Right ventricle myocardium superior (tissue), 1 donor: ENCODE measurements at regions of chr1 and their contacts with region 1.

Region 1: GRCh38 chr1:45359882-45360513 is 19.8 kb upstream of the MUTYH start:
- DNase-seq: peak; percentile 65
- ATAC-seq: peak; percentile 92

Region 2: DNA sequence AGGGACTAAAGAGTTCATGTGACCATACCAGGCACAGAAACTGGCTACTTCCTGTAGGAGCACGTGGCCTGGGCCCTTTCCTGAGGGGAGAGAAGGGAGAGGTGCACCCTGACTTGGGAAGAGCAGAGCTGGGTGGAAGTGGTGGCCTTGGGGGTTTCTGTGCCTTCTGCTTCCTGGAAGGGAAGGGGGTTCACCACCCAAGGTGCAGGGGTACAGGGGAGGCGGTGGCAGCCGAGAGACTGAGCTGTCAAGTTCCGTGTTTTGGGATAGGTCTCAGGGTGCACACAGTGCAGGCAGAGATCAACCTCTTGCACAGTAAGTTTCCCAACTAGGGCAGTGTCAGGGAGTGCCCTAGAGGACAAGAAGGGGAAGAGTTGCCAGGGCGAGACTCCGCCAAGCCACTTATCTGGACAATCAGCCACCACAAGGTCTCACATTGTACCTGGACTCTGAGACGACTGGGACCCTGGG is 359.0 kb before region 1 on chr1:
- intact Hi-C with region 1: no loop called
- DNase-seq: no peak
- ATAC-seq: peak; percentile 42

Region 3: GRCh38 chr1:45051005-45051772 is 308.8 kb before region 1 on chr1:
- intact Hi-C with region 1: no loop called
- DNase-seq: no peak
- ATAC-seq: no peak

Region 4: GRCh38 chr1:45230540-45230939 is 129.5 kb before region 1 on chr1:
- intact Hi-C with region 1: no loop called
- DNase-seq: no peak
- ATAC-seq: no peak

Region 5: DNA sequence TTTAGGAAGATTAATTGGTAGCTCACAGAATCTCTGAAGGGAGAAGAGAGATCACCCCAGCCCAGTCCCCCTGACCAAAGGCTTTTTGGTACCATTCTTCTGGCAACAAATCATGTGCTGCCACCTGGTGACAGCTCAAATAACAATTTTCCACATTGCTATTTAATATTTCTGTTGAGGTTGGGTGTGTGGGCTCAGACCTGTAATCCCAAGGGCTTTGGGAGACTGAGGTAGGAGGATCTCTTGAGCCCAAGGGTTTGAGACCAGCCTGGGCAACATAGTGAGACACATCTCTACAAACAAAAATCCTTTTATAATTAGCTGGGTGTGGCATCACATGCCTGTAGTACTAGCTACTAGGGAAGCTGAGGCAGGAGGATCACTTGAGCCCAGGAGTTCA is 133.2 kb after region 1 on chr1:
- intact Hi-C with region 1: loop called (anchors 2 kb)
- DNase-seq: no peak
- ATAC-seq: no peak

Region 6: DNA sequence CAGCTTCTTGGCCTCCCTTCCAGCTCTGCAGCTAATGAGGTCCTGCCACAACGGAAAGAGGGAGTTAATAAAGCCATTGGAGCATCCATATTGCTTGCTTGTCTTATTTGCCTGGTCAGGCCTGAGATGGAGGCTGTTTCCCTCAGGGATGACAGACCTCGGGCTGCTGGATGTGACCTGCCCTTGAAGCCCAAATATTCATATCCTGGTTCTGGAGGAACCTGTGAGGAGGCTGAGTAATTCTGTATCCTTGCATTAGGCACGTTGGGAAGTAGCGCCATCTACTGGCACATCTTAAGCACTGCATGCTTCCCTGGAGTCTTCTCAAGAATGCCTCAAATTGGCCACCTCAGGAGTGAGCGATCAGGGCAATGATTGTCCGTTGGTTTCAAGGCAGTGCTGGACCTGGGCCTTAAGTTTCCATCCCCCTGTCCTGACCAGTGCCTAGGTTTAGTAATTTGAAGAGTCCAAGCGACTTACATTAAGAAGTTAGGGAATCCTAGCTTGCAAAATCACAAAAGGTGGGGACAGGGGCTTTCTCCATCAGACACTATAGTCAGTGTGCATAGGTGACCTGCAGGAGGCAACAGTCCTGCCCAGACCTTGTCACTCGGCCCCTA is 210.1 kb after region 1 on chr1:
- intact Hi-C with region 1: loop called (anchors 5 kb)
- DNase-seq: peak; percentile 62
- ATAC-seq: peak; percentile 90